ENCODE measurements at regions of chr12 and their contacts with region 1.

Region 1: DNA sequence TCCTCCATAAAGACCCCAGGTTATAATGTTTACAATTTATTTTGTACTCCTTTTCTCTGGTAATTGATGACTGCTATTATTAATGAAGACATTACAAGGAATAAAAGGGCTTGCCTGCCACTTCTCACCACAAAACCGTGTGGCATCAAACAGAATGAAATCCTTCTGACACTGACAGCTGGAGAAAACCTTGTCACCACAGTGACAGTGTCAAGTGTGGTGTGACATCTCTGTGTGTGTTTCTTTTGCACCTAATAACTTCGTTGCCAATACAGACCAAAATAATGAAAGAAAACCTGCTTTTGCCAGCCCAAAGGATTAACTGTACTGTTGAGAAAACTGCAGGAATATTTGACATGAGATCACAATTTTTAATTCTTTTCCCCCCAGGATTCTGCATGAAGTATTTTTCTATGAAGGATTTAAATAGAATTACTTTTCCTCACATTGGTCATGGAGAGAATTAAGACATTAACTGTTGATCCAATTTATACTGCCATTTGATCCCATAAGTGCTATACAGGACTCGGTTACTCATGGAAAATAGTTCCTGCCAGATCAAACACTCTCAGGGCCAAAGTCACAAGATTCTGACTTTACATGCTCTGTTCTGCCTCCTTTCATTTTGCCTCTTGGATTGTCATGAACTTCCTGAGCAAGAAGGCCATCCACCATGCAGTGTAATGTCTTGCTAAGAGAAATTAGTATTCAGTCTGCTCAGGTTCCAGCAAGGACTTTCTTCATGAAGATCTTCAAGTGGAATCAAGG is 60.4 kb upstream of the IFNG-AS1 start:
- DNase-seq: no peak
- H3K4me3 ChIP-seq: no peak overlapping the region
- H3K27ac ChIP-seq: no peak overlapping the region
- H3K4me1 ChIP-seq: no peaks in the 10 kb centered on the region
- H3K27me3 ChIP-seq: no peaks in the 10 kb centered on the region
- CTCF ChIP-seq: no peak
- POLR2A ChIP-seq: no peak

Region 2: DNA sequence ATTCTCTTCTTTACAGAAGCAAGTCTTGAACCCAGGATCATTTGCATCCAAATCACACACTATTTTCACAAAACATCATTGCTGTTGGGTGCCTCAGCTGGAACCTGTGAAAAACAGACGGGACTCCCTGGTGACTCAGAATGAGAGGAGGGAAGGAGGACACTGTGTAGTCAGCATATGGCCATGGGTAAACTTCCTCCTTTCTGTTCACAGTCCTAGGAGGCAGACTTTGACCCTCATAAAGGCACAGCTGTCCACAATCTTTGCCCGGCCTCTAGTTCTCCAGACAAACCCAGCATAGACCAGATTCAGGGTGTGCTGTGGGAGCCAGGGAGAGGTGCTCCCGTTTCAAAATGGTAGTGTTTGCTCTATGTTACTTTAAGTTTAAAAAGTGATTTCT is 218.2 kb before region 1 on chr12:
- intact Hi-C with region 1: loop called (anchors 10 kb)
- DNase-seq: peak; percentile 50
- H3K4me3 ChIP-seq: no peak overlapping the region
- H3K27ac ChIP-seq: no peak overlapping the region
- H3K4me1 ChIP-seq: no peaks in the 10 kb centered on the region
- H3K27me3 ChIP-seq: no peaks in the 10 kb centered on the region
- CTCF ChIP-seq: no peak
- POLR2A ChIP-seq: no peak

Region 3: DNA sequence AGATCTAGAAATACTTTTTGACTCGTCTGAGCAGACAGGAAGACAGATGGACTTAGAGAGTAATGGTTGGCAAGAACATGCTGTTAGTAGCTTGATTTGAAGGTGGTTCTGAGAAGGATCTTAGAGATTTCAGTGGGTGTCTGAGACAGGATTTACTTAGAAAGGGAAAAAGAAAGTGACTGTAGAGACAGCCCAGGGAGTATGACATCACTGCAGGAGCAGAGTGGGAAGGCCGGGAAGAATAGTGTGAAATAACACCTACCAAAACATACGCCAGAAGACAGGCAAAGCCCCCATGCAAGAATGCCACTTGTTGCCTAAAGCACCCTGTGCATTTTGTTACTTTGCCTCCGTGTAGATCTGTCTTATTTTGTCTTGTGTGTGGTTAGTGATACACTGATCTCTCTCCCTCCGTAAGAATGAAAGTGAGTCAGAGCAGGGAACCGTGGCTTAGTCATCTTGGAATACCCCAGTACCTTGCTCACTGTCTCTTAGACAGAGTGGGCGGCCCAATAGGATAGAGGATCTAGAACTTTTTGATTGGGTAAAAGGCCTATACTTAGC is 100.9 kb before region 1 on chr12:
- intact Hi-C with region 1: loop called (anchors 10 kb)
- DNase-seq: no peak
- H3K4me3 ChIP-seq: peak overlapping the region; percentile 9 to 20
- H3K27ac ChIP-seq: peak overlapping the region; percentile 37 to 69
- H3K4me1 ChIP-seq: no peaks in the 10 kb centered on the region
- H3K27me3 ChIP-seq: no peaks in the 10 kb centered on the region
- CTCF ChIP-seq: no peak
- POLR2A ChIP-seq: no peak

Measured in prostate gland (tissue), 2 donors.